ENCODE measurements at regions of chr7 and their contacts with region 1.

Region 1: GRCh38 chr7:41425926-41426325 is 277.0 kb downstream of the INHBA start:
- DNase-seq: no peak

Region 2: DNA sequence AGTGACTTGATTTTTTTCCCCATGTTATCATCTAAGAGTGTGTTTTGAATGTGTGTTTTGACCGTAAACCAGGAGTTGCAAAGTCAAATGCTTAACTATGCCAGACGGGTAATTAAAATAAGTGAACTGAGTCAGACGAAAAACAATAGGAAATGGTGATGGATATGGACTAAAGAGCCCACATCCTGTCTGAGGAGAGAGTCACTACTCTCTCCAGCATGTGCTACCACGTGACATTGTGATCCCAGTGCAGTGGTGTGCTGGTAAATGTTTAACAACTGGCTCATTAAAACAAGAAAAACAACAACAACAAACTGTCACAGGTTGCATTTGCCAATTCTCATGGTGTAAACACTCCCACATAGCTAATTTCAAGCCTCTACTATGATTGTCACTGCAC is 1126.8 kb before region 1 on chr7:
- intact Hi-C with region 1: no loop called
- DNase-seq: no peak

Region 3: DNA sequence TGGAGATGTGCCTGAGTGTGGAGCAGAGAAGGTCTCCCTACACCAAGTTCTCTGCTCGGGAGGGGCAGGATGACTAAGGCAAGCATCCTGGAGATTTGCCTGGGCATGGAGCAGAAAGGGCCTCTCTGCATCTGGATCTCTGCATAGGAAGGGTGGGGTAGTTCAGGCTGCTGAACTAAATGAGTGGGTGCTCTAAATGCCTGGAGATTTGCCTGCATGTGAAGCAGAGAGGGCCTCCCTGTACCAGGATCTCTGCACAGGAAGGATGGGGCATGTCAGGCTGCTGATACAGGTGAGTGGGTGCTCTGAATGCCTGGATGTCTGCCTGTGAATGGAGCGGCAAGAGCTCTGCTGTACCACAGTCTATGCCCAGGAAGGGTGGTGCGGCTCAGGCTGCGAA is 610.4 kb before region 1 on chr7:
- intact Hi-C with region 1: no loop called
- DNase-seq: no peak

Region 4: GRCh38 chr7:41277561-41277960 is 148.4 kb before region 1 on chr7:
- intact Hi-C with region 1: no loop called
- DNase-seq: no peak

Region 5: DNA sequence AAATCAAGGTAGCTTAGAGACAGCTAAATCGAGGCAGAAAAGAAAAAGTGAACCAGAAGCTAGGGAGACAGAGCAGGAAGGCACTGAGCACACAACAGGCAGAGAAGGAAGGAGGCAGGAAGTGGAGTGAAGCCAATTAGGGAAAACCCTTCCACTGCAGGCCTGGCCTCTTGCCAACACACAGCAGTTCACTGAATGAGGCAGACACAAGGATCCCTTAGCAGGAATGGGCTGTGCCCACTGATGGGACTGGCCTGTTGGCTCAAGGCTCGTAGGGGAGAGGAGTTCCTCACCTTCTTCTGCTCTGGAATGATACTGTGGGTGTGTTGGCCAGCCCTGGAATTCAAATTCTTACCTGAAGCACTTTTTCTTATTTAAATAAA is 1936.7 kb after region 1 on chr7:
- intact Hi-C with region 1: loop called in 1 of 2 experiments (anchors 10 kb)
- DNase-seq: no peak

Measured in posterior vena cava (tissue), 2 donors.